PC-3 (cell line): ENCODE measurements at regions of chr2 and their contacts with region 1.

Region 1: DNA sequence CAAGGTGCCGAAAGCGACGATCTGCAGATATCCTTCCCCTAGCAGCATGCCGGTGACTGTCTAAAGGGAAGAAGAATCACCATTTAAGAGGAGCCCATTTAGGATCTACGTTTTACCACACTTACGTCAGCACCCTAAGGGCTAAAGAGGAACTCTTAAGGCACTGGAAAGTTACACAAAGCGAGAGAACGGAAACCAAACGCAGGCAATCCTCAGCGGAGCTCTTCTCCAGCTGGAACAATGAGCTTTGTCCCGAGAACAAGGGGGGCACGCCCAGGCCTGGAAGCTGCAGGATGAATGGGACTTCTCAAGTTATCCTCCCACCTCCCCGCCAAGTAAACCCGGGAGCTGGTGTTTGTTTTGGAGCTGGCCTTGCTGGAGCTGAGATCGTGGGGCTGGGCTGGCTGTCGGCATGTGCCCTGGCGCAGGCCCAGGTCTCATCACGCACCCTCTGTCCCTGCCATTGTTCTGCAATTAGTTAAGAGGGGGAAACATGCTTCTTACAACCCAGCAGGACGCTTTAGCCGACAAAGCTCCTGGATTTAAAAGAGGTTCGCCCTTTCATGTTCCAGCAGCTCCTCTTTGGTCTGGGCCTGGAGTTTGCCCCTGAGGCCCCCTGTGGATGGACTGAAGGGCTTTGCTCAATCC is 36.4 kb downstream of the PXDN start:
- DNase-seq: peak; percentile 98
- ATAC-seq: peak; percentile 84
- H3K4me3 ChIP-seq: peak overlapping the region; percentile 63
- H3K27ac ChIP-seq: peak overlapping the region; percentile 99
- H3K4me1 ChIP-seq: peaks cover 27% of the 10 kb centered on the region
- H3K27me3 ChIP-seq: no peaks in the 10 kb centered on the region
- CTCF ChIP-seq: no peak

Region 2: DNA sequence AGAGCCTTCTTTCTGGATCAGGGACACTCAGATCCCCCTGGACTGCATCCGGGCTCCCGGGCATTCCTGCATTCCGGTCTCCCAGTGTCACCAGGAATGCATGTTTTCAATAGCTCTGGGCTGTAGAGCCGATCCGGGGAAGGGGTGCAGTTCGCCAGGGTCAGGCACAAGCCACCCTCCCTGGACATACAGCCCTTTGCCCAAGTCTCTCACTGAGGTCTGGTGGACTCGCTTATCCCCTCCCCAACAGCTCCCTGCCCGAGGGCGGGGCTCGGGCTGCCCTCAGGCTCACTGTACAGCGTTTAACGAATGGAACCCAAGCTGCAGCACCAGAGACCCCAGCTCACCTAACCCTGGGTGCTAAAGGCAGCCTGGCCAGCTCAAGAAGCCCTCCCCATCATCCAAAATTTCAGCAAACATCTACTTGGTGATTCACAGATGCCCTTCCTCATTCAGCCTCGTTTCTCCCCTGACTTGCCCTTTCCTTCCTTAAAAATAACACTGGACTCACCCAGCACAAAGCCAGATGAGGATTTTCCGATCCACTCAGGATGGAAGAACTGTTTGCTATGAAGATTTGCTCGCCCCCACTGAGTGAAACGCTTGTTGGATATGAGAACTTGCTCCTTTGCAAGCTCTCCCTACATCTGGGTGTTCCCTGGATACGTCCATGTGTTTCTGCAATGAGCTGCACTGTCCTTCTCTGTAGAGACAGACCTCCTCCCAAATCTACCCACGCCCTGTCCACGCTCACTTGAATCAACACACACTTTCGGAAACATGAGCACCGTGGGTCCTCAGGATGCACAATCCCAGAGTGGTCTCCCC is 21.7 kb before region 1 on chr2:
- CTCF ChIA-PET with region 1: no interaction called
- POLR2A ChIA-PET with region 1: interaction called, 6 read pairs
- intact Hi-C with region 1: loop called (anchors 1 kb)
- DNase-seq: peak; percentile 91
- ATAC-seq: peak; percentile 58
- H3K4me3 ChIP-seq: 0 out of 2 replicates have a peak overlapping the region, but pooled peaks have one; percentile 3
- H3K27ac ChIP-seq: peak overlapping the region; percentile 98
- H3K4me1 ChIP-seq: peaks cover 36% of the 10 kb centered on the region
- H3K27me3 ChIP-seq: no peaks in the 10 kb centered on the region
- CTCF ChIP-seq: no peak

Region 3: DNA sequence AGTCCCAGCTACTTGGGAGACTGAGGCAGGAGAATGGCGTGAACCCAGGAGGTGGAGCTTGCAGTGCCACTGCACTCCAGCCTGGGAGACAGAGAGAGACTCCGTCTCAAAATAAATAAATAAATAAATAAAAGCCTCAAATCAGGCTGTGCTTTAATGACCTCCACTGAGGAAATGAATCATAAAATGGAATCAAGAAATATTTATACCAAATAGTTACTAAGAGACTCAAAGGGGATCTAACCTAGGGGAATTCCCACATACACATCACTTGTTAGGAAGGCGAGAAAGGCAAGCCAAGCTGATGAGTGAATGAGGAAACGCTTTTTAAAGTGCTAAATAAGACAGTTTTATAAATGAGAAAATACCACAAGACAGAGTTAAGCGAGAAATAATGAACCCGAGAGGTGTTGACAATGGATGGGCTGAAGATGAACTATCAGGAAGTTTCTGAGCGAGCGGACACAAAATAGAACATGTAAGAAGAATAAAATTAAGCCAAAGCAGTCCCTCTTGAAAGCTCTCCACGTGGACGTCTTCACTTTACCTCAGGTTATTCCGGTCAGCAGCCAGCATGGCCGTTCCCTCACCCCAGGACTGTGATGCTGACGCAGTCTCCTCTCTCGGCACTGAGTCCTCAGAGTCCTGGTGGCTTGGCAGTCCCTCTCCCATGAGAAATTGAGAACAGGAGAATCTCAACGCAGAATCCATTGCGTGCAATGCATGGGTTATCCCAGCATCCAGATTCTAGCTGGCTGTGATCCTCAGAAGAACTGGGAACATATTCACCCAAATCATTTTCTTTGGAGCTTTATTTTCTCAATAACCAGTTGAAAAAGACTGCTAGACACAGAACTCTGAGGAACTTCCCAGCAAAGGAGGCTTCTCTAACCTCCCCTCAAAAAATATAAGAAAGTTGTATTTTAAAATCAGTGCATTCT is 14.1 kb after region 1 on chr2:
- CTCF ChIA-PET with region 1: no interaction called
- POLR2A ChIA-PET with region 1: interaction called, 3 read pairs
- intact Hi-C with region 1: loop called (anchors 1 kb)
- DNase-seq: peak; percentile 87
- ATAC-seq: peak; percentile 60
- H3K4me3 ChIP-seq: peak overlapping the region; percentile 45; the same call in 1 of the 2 replicates
- H3K27ac ChIP-seq: peak overlapping the region; percentile 99
- H3K4me1 ChIP-seq: peaks cover 61% of the 10 kb centered on the region
- H3K27me3 ChIP-seq: no peaks in the 10 kb centered on the region
- CTCF ChIP-seq: no peak

Region 4: GRCh38 chr2:1730015-1730927 is 22.4 kb after region 1 on chr2:
- CTCF ChIA-PET with region 1: interaction called, 5 read pairs
- POLR2A ChIA-PET with region 1: interaction called, 14 read pairs
- intact Hi-C with region 1: loop called (anchors 2 kb)
- DNase-seq: peak; percentile 92
- ATAC-seq: peak; percentile 68
- H3K4me3 ChIP-seq: peak overlapping the region; percentile 48
- H3K27ac ChIP-seq: peak overlapping the region; percentile 97
- H3K4me1 ChIP-seq: peaks cover 57% of the 10 kb centered on the region
- H3K27me3 ChIP-seq: no peaks in the 10 kb centered on the region
- CTCF ChIP-seq: no peak

Region 5: GRCh38 chr2:1742681-1743395 is 34.9 kb after region 1 on chr2:
- CTCF ChIA-PET with region 1: no interaction called
- POLR2A ChIA-PET with region 1: no interaction called
- intact Hi-C with region 1: loop called (anchors 2 kb)
- DNase-seq: peak; percentile 91
- ATAC-seq: peak; percentile 62
- H3K4me3 ChIP-seq: peak overlapping the region; percentile 75
- H3K27ac ChIP-seq: peak overlapping the region; percentile 98
- H3K4me1 ChIP-seq: peaks cover 50% of the 10 kb centered on the region
- H3K27me3 ChIP-seq: no peaks in the 10 kb centered on the region
- CTCF ChIP-seq: peak; percentile 76